CD4-positive, alpha-beta T cell (primary cell): ENCODE measurements at regions of chr12 and their contacts with region 1.

Region 1: DNA sequence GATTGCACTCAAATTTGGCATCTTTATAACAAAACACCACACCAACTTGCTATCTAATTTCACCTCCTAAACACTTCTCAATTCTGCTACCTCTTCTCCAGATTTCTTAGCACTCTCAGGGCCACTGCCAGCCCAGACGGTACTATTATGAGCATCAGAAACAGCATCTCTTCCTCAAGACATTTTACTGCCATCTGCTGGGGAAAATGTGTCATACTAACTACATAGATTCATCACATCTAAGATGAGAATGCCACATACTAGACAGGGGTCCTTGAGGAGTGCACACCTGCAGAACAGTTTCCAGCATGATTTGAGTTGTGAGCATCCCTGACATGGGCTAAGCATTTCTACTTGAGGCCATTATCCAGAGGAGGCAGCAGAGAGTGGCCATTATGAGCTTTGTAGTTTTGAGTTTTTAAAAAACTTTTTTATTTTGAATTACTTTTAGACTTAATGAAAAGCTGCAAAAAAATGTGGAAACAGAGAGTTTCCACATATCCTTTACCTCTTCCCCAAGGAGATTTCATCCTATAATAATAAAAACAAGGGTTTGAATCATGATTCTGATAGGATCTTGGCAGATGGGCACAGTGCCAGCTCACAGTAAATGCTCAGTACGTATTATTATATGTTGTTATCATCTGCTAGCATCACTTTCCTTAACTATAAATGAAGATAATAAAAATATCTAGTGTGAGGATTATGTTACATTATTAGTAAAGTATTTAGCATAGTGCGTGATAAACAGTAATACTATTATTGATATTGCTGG is 15.2 kb upstream of the GRIP1 start:
- DNase-seq: peak in 6 of 14 experiments; percentile 1 to 75 (median 48)
- ATAC-seq: peak; percentile 89
- H3K4me3 ChIP-seq: no peak overlapping the region
- H3K4me3 Mint-ChIP-seq: no peak overlapping the region
- H3K27ac ChIP-seq: no peak overlapping the region
- H3K27ac Mint-ChIP-seq: no peak overlapping the region
- H3K4me1 ChIP-seq: no peaks in the 10 kb centered on the region
- H3K4me1 Mint-ChIP-seq: peaks cover 22% of the 10 kb centered on the region
- H3K27me3 ChIP-seq: no peaks in the 10 kb centered on the region
- H3K27me3 Mint-ChIP-seq: no peaks in the 10 kb centered on the region
- CTCF ChIP-seq: peak; percentile 76

Region 2: GRCh38 chr12:65556681-65557437 is 1137.2 kb before region 1 on chr12:
- CTCF ChIA-PET with region 1: no interaction called
- POLR2A ChIA-PET with region 1: no interaction called
- intact Hi-C with region 1: loop called in 1 of 2 experiments (anchors 10 kb)
- DNase-seq: peak; percentile 22 to 69 (median 40)
- ATAC-seq: peak; percentile 82
- H3K4me3 ChIP-seq: no peak overlapping the region
- H3K4me3 Mint-ChIP-seq: no peak overlapping the region
- H3K27ac ChIP-seq: no peak overlapping the region
- H3K27ac Mint-ChIP-seq: no peak overlapping the region
- H3K4me1 ChIP-seq: peaks cover 5% of the 10 kb centered on the region
- H3K4me1 Mint-ChIP-seq: no peaks in the 10 kb centered on the region
- H3K27me3 ChIP-seq: peaks cover 0 to 4% of the 10 kb centered on the region in 2 experiments
- H3K27me3 Mint-ChIP-seq: peaks cover 19% of the 10 kb centered on the region
- CTCF ChIP-seq: peak; percentile 70

Region 3: GRCh38 chr12:66144791-66145754 is 549.0 kb before region 1 on chr12:
- CTCF ChIA-PET with region 1: no interaction called
- POLR2A ChIA-PET with region 1: no interaction called
- intact Hi-C with region 1: loop called (anchors 5 to 10 kb)
- DNase-seq: peak in 3 of 14 experiments; percentile 11 to 52 (median 52)
- ATAC-seq: peak; percentile 73
- H3K4me3 ChIP-seq: no peak overlapping the region
- H3K4me3 Mint-ChIP-seq: no peak overlapping the region
- H3K27ac ChIP-seq: no peak overlapping the region
- H3K27ac Mint-ChIP-seq: peak overlapping the region; percentile 50
- H3K4me1 ChIP-seq: no peaks in the 10 kb centered on the region
- H3K4me1 Mint-ChIP-seq: peaks cover 34% of the 10 kb centered on the region
- H3K27me3 ChIP-seq: no peaks in the 10 kb centered on the region
- H3K27me3 Mint-ChIP-seq: no peaks in the 10 kb centered on the region
- CTCF ChIP-seq: peak; percentile 36

Region 4: GRCh38 chr12:66269757-66270383 is 424.2 kb before region 1 on chr12:
- CTCF ChIA-PET with region 1: no interaction called
- POLR2A ChIA-PET with region 1: no interaction called
- intact Hi-C with region 1: loop called (anchors 2 to 5 kb)
- DNase-seq: peak in 5 of 14 experiments; percentile 7 to 72 (median 67)
- ATAC-seq: peak; percentile 73
- H3K4me3 ChIP-seq: no peak overlapping the region
- H3K4me3 Mint-ChIP-seq: no peak overlapping the region
- H3K27ac ChIP-seq: no peak overlapping the region
- H3K27ac Mint-ChIP-seq: no peak overlapping the region
- H3K4me1 ChIP-seq: peaks cover 20% of the 10 kb centered on the region
- H3K4me1 Mint-ChIP-seq: peaks cover 6% of the 10 kb centered on the region
- H3K27me3 ChIP-seq: no peaks in the 10 kb centered on the region
- H3K27me3 Mint-ChIP-seq: no peaks in the 10 kb centered on the region
- CTCF ChIP-seq: peak; percentile 83

Region 5: GRCh38 chr12:66279123-66279712 is 414.9 kb before region 1 on chr12:
- CTCF ChIA-PET with region 1: no interaction called
- POLR2A ChIA-PET with region 1: no interaction called
- intact Hi-C with region 1: loop called in 1 of 2 experiments (anchors 5 kb)
- DNase-seq: peak; percentile 29 to 74 (median 42)
- ATAC-seq: peak; percentile 76
- H3K4me3 ChIP-seq: no peak overlapping the region
- H3K4me3 Mint-ChIP-seq: peak overlapping the region; percentile 2
- H3K27ac ChIP-seq: no peak overlapping the region
- H3K27ac Mint-ChIP-seq: no peak overlapping the region
- H3K4me1 ChIP-seq: peaks cover 27% of the 10 kb centered on the region
- H3K4me1 Mint-ChIP-seq: peaks cover 66% of the 10 kb centered on the region
- H3K27me3 ChIP-seq: no peaks in the 10 kb centered on the region
- H3K27me3 Mint-ChIP-seq: no peaks in the 10 kb centered on the region
- CTCF ChIP-seq: peak; percentile 83

Region 6: GRCh38 chr12:66678338-66679270 is 15.5 kb before region 1 on chr12 and contains the start of gene GRIP1:
- CTCF ChIA-PET with region 1: no interaction called
- POLR2A ChIA-PET with region 1: no interaction called
- intact Hi-C with region 1: no loop called
- DNase-seq: no peak
- ATAC-seq: no peak
- H3K4me3 ChIP-seq: no peak within 1 kb of the TSS
- H3K4me3 Mint-ChIP-seq: no peak within 1 kb of the TSS
- H3K27ac ChIP-seq: no peak within 1 kb of the TSS
- H3K27ac Mint-ChIP-seq: no peak within 1 kb of the TSS
- H3K4me1 ChIP-seq: no peaks in the 10 kb centered on the region
- H3K4me1 Mint-ChIP-seq: no peaks in the 10 kb centered on the region
- H3K27me3 ChIP-seq: peaks cover 0 to under 1% of the 10 kb centered on the region in 2 experiments
- H3K27me3 Mint-ChIP-seq: peaks cover 6% of the 10 kb centered on the region
- CTCF ChIP-seq: no peak
- total RNA-seq, gene GRIP1: 5.4 TPM

Region 7: GRCh38 chr12:66708704-66709456 is 14.8 kb after region 1 on chr12:
- CTCF ChIA-PET with region 1: interaction called, 3 read pairs
- POLR2A ChIA-PET with region 1: interaction called, 11 read pairs
- intact Hi-C with region 1: no loop called
- DNase-seq: peak in 3 of 14 experiments; percentile 36 to 46 (median 38)
- ATAC-seq: peak; percentile 85
- H3K4me3 ChIP-seq: no peak overlapping the region
- H3K4me3 Mint-ChIP-seq: peak overlapping the region; percentile 70
- H3K27ac ChIP-seq: no peak overlapping the region
- H3K27ac Mint-ChIP-seq: peak overlapping the region; percentile 73
- H3K4me1 ChIP-seq: peaks cover 3% of the 10 kb centered on the region
- H3K4me1 Mint-ChIP-seq: peaks cover 48% of the 10 kb centered on the region
- H3K27me3 ChIP-seq: no peaks in the 10 kb centered on the region
- H3K27me3 Mint-ChIP-seq: peaks cover 5% of the 10 kb centered on the region
- CTCF ChIP-seq: peak; percentile 80

Region 8: GRCh38 chr12:67268896-67269631 is 575.0 kb after region 1 on chr12 and contains the start of gene CAND1:
- CTCF ChIA-PET with region 1: no interaction called
- POLR2A ChIA-PET with region 1: no interaction called
- intact Hi-C with region 1: no loop called
- DNase-seq: peak; percentile 90 to 99 (median 94)
- ATAC-seq: peak; percentile 77
- H3K4me3 ChIP-seq: peak within 1 kb of the TSS; percentile 91
- H3K4me3 Mint-ChIP-seq: peak within 1 kb of the TSS; percentile 94
- H3K27ac ChIP-seq: peak within 1 kb of the TSS; percentile 96 to 98
- H3K27ac Mint-ChIP-seq: peak within 1 kb of the TSS; percentile 97
- H3K4me1 ChIP-seq: peaks cover 24% of the 10 kb centered on the region
- H3K4me1 Mint-ChIP-seq: peaks cover 50% of the 10 kb centered on the region
- H3K27me3 ChIP-seq: no peaks in the 10 kb centered on the region
- H3K27me3 Mint-ChIP-seq: no peaks in the 10 kb centered on the region
- CTCF ChIP-seq: no peak
- total RNA-seq, gene CAND1: 118 to 124 TPM